Vagina (tissue), 2 donors: ENCODE measurements at regions of chr12 and their contacts with region 1.

Region 1: GRCh38 chr12:90959538-90960139 is 4.7 kb upstream of the CCER1 start:
- DNase-seq: no peak
- H3K4me3 ChIP-seq: no peak overlapping the region
- H3K27ac ChIP-seq: no peak overlapping the region
- H3K4me1 ChIP-seq: no peaks in the 10 kb centered on the region
- H3K27me3 ChIP-seq: no peaks in the 10 kb centered on the region
- CTCF ChIP-seq: peak; percentile 67 to 69 (median 68)
- POLR2A ChIP-seq: no peak

Region 2: GRCh38 chr12:89542912-89543592 is 1416.6 kb before region 1 on chr12:
- intact Hi-C with region 1: loop called (anchors 10 kb)
- DNase-seq: no peak
- H3K4me3 ChIP-seq: no peak overlapping the region
- H3K27ac ChIP-seq: no peak overlapping the region
- H3K4me1 ChIP-seq: peaks cover 20% of the 10 kb centered on the region
- H3K27me3 ChIP-seq: no peaks in the 10 kb centered on the region
- CTCF ChIP-seq: peak; percentile 57 to 79 (median 67)
- POLR2A ChIP-seq: no peak

Region 3: GRCh38 chr12:90896164-90896563 is 63.5 kb before region 1 on chr12:
- intact Hi-C with region 1: no loop called
- DNase-seq: no peak
- H3K4me3 ChIP-seq: no peak overlapping the region
- H3K27ac ChIP-seq: no peak overlapping the region
- H3K4me1 ChIP-seq: no peaks in the 10 kb centered on the region
- H3K27me3 ChIP-seq: no peaks in the 10 kb centered on the region
- CTCF ChIP-seq: no peak
- POLR2A ChIP-seq: no peak

Region 4: DNA sequence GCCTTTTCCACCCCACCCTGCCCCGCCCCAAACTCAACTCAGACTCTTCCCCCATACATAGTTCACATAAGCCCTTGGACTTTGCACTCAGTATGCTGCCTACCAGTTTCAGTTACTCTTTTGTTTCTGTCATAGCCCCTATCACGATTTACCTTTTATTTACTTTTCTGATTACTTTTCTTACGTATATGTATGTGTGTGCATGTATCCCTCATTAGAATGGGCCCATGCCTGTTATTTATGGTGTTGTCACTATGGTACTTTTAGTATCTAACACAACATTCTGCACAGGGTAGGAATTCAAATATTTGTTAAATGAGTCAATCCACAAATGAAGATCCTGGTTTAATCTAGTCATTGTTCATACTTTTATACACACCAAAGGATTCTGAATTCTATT is 168.1 kb after region 1 on chr12:
- intact Hi-C with region 1: no loop called
- DNase-seq: no peak
- H3K4me3 ChIP-seq: no peak overlapping the region
- H3K27ac ChIP-seq: no peak overlapping the region
- H3K4me1 ChIP-seq: no peaks in the 10 kb centered on the region
- H3K27me3 ChIP-seq: no peaks in the 10 kb centered on the region
- CTCF ChIP-seq: no peak
- POLR2A ChIP-seq: no peak

Region 5: DNA sequence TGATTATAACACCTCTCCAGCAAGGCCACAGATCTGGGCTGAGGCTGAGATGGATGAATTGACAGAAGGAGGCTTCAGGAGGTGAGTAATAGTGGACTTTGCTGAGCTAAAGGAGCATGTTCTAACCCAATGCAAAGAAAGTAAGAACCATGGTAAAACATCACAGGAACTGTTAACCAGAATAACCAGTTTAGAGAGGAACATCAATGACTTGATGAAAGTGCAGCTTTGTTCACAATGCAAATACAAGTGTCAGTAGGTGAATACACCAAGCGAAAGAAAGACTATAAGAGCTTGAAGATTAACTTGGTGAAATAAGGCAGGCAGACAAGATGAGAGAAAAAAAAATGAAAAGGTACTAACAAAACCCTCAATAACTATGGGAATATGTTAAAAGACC is 335.7 kb after region 1 on chr12:
- intact Hi-C with region 1: no loop called
- DNase-seq: no peak
- H3K4me3 ChIP-seq: no peak overlapping the region
- H3K27ac ChIP-seq: no peak overlapping the region
- H3K4me1 ChIP-seq: no peaks in the 10 kb centered on the region
- H3K27me3 ChIP-seq: no peaks in the 10 kb centered on the region
- CTCF ChIP-seq: no peak
- POLR2A ChIP-seq: no peak